ENCODE measurements at regions of chr5 and their contacts with region 1.

Region 1: GRCh38 chr5:112221128-112221527 is 197.9 kb downstream of the EPB41L4A start:
- H3K4me3 ChIP-seq: no peak overlapping the region
- H3K27ac ChIP-seq: no peak overlapping the region
- H3K4me1 ChIP-seq: no peaks in the 10 kb centered on the region
- CTCF ChIP-seq: no peak

Region 2: DNA sequence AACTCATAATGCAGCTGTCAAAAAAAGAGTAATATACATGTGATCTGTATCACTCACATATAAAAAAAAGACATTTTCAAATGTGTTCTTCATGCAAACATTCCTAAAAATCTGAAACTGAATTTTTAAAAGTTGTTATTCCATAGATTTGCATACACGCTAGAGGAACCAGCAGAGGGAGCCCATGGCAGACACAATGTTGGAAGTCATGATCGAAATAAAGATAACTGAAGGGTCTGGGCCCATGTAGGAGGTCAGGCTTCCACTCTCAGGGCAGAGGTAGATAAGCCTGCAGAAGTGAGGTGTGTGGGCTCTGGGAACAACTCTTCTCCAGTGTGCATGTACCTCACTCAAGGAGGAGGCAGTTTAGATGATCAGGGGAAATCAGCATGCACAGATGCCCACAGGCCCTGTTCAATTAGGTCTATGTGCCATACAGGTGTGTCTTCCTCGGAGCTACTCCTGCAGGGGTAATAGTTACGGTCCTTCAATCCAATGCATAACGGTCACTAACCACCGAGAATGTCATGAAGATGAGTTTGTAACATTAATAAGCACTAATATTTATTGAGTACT is 10.6 kb before region 1 on chr5:
- CTCF ChIA-PET with region 1: interaction called, 11 read pairs
- POLR2A ChIA-PET with region 1: no interaction called
- H3K4me3 ChIP-seq: no peak overlapping the region
- H3K27ac ChIP-seq: no peak overlapping the region
- H3K4me1 ChIP-seq: peaks cover 5% of the 10 kb centered on the region
- CTCF ChIP-seq: 0 out of 2 replicates have a peak, but pooled peaks have one; percentile 23

Region 3: DNA sequence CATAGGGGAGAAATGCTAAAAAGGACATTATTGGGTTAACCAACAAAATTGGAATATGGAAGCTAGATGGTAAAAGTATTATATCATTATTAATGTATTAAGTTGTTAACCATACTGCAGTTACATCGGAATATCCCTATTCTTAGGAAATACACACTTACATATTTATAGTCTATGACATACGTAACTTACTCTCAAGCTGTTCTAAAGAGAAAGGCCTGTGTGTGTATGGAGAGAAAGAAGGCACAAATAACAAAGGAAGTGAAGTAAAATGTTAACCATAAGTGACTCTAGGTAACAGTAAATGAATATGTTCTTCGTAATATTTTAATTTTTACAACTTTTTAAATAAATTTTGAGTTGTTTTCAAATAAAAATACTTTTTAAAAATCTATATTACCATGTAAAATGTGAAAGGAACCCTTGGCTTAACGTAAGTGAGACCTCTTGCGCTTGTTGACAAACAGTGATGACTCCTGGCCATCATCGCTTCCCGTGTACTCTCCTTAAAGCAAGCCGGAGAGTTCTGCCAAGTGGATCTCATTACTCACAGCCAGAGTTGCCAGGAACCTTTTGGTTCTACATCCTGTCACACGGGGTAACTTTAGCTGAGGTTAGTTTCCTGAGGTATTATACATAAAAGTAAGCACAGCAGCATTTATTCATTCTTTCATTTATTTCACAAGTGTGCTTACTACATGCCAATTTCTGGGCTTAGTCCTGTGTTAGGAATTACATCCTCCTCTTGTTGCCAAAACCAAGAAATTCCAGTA is 32.5 kb after region 1 on chr5:
- CTCF ChIA-PET with region 1: no interaction called
- POLR2A ChIA-PET with region 1: no interaction called
- H3K4me3 ChIP-seq: no peak overlapping the region
- H3K27ac ChIP-seq: no peak overlapping the region
- H3K4me1 ChIP-seq: no peaks in the 10 kb centered on the region
- CTCF ChIP-seq: no peak

Measured in HEK293 (cell line).